Endothelial cell of umbilical vein (primary cell): ENCODE measurements at regions of chr5 and their contacts with region 1.

Region 1: GRCh38 chr5:157253547-157253946 is 12.4 kb upstream of the CYFIP2 start:
- DNase-seq: peak; percentile 57
- H3K4me3 ChIP-seq: no peak overlapping the region
- H3K27ac ChIP-seq: no peak overlapping the region
- H3K4me1 ChIP-seq: no peaks in the 10 kb centered on the region
- H3K27me3 ChIP-seq: peaks cover 3% of the 10 kb centered on the region in 2 experiments
- CTCF ChIP-seq: peak; percentile 70 to 78
- POLR2A ChIP-seq: no peak

Region 2: DNA sequence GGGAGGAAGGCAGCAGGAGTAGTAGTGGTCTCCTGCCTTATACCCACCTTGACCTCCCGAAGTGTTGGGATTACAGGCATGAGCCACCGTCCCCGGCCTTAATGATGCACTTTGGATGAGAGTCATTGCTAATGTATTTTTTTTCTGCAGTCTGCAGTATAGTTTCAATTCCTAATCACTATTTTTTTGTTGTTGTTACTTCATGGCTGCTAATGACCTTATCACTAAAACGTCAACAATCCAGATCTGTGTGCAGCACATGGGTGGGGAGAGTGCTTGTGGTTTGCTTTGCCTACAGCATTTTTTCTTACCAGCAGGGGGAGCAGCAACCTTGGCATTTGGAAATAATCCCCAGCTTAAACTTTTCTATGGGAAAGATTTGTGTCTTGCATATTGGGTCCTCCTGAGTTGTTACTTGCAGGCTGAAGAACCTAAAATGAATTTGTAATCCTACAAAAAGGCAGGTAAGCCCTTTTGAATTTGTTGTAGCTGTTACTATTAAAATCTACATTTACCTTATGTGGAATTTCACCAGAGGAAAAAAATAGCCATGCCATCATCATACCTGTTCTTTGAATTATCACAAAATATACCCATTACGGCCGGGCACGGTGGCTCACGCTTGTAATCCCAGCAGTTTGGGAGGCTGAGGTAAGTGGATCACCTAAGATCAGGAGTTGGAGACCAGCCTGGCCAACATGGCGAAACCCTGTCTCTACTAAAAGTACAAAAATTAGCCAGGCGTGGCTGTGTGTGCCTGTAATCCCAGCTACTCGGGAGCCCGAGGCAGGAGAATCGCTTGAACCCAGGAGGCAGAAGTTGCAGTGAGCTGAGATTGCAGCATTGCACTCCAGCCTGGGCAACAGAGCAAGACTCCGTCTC is 104.6 kb before region 1 on chr5:
- CTCF ChIA-PET with region 1: interaction called, 3 read pairs
- POLR2A ChIA-PET with region 1: no interaction called
- dilution Hi-C with region 1: no loop called
- intact Hi-C with region 1: loop called (anchors 5 kb)
- DNase-seq: peak; percentile 59
- H3K4me3 ChIP-seq: no peak overlapping the region
- H3K27ac ChIP-seq: no peak overlapping the region
- H3K4me1 ChIP-seq: no peaks in the 10 kb centered on the region
- H3K27me3 ChIP-seq: no peaks in the 10 kb centered on the region
- CTCF ChIP-seq: peak; percentile 80 to 81
- POLR2A ChIP-seq: no peak

Region 3: DNA sequence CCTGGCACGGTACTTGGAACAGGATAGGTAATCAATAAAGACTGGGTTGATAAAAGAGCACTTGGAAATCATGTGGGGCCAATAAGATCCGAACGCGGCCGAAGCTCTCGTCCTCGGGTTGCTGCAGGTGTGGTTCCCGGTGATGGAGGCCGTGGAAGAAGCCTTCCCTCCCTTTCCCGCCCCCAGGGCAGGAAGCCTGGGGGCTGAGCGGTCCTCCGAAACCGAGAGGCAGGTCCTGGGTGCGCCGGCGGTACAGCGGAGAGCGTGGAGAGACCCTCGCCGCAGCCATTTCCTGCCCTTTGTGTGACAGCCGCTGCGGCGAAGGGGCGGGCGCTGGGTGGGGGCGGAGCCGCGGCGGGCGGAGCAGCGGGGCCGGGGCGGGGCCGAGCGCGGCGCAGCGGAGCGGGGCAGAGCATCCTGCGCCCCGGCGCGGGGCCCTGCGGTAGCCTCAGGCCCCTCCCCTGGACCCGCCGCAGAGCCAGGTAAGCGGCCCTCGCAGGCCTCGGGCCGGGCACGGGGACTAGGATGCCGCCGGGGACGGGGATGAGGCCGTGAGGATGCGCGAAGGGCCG is 12.3 kb after region 1 on chr5 and contains the start of gene CYFIP2:
- CTCF ChIA-PET with region 1: interaction called, 24 read pairs
- POLR2A ChIA-PET with region 1: no interaction called
- dilution Hi-C with region 1: no loop called
- intact Hi-C with region 1: no loop called
- DNase-seq: peak; percentile 30
- H3K4me3 ChIP-seq: peak within 1 kb of the TSS; percentile 50 to 60 (median 58)
- H3K27ac ChIP-seq: no peak within 1 kb of the TSS
- H3K4me1 ChIP-seq: peaks cover 4% of the 10 kb centered on the region
- H3K27me3 ChIP-seq: peaks cover 8 to 10% of the 10 kb centered on the region in 2 experiments
- CTCF ChIP-seq: no peak
- POLR2A ChIP-seq: no peak
- total RNA-seq, gene CYFIP2: 22.2 and 22.4 TPM in 2 replicates

Region 4: GRCh38 chr5:157312492-157312891 is 58.9 kb after region 1 on chr5:
- CTCF ChIA-PET with region 1: interaction called, 35 read pairs
- POLR2A ChIA-PET with region 1: no interaction called
- dilution Hi-C with region 1: no loop called
- intact Hi-C with region 1: loop called (anchors 1 kb)
- DNase-seq: peak; percentile 55
- H3K4me3 ChIP-seq: no peak overlapping the region
- H3K27ac ChIP-seq: no peak overlapping the region
- H3K4me1 ChIP-seq: no peaks in the 10 kb centered on the region
- H3K27me3 ChIP-seq: no peaks in the 10 kb centered on the region
- CTCF ChIP-seq: peak; percentile 49 to 70
- POLR2A ChIP-seq: no peak

Region 5: GRCh38 chr5:157476702-157477408 is 223.3 kb after region 1 on chr5:
- CTCF ChIA-PET with region 1: interaction called, 9 read pairs
- POLR2A ChIA-PET with region 1: no interaction called
- dilution Hi-C with region 1: no loop called
- intact Hi-C with region 1: loop called (anchors 2 kb)
- DNase-seq: peak; percentile 67
- H3K4me3 ChIP-seq: no peak overlapping the region
- H3K27ac ChIP-seq: no peak overlapping the region
- H3K4me1 ChIP-seq: peaks cover 6% of the 10 kb centered on the region
- H3K27me3 ChIP-seq: peaks cover 0 to 2% of the 10 kb centered on the region in 2 experiments
- CTCF ChIP-seq: peak; percentile 73 to 77
- POLR2A ChIP-seq: no peak